ENCODE measurements at regions of chr3 and their contacts with region 1.

Region 1: GRCh38 chr3:183895296-183895695 is 10.6 kb upstream of the PARL start:
- DNase-seq: peak; percentile 56
- ATAC-seq: peak; percentile 62
- H3K4me3 Mint-ChIP-seq: no peak overlapping the region
- H3K27ac Mint-ChIP-seq: no peak overlapping the region
- H3K4me1 Mint-ChIP-seq: peaks cover 2% of the 10 kb centered on the region
- H3K27me3 Mint-ChIP-seq: peaks cover 7% of the 10 kb centered on the region

Region 2: DNA sequence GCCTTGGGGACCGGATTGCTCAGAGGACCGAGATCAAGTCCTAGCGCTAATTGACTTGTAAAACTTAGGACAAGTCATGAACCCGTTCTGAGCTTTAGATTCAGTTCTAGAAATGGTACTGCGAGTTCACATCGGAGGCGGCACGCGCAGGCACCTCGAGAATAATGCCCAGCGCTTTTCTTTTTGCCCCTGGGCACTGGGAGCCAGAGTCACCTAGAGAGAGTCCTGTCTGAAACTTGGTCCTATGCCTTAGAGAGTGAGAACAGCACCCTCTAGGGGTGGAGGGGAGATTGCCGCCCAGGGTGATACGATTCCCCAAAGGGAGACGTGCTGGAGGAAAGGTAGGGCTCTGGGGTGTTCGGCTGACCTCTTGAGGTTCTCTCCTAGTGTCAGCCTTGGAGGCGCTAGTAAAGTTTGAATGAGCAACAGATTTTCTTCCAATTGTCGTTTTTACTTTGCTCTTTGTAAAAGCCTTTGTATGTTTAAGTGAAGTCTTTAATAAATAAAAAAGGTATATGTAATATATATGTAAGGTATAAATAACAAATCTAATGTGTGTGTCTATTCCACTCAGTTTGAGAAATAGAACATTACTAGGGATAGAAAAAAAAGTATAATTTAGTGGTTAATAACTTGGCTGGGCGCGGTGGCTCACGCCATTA is 355.0 kb after region 1 on chr3:
- CTCF ChIA-PET with region 1: interaction called, 14 read pairs
- POLR2A ChIA-PET with region 1: no interaction called
- DNase-seq: peak; percentile 94
- ATAC-seq: peak; percentile 71
- H3K4me3 Mint-ChIP-seq: peak overlapping the region; percentile 82
- H3K27ac Mint-ChIP-seq: peak overlapping the region; percentile 93
- H3K4me1 Mint-ChIP-seq: peaks cover 12% of the 10 kb centered on the region
- H3K27me3 Mint-ChIP-seq: no peaks in the 10 kb centered on the region

Measured in activated CD8-positive, alpha-beta T cell treated with anti-CD3 and anti-CD28 coated beads, Interleukin-2, amount 10 ng/mL, durations not matched to agents 7 days and 5 days (primary cell).